WTC11 (cell line): ENCODE measurements at regions of chr2 and their contacts with region 1.

Region 1: DNA sequence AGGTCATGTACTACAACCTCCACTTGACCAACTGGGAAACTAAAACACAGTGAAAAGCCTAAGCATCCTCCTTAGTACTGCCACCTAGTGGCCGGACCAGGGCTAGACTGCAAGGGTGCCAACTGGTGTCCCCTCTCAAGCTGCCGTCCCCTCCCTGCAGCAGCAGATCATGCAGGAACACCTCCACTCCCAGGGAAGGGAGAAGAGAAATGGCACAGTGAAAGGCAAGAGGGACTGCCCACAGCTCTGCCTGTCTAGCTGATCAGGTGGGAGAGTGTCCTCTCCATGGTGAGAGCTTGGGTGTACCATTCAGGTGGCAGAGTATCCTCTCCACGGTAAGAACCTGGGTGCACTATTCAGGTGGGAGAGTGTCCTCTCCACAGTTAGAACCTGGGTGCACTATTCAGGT is 78.1 kb downstream of the AAK1 start:
- DNase-seq: peak; percentile 91
- ATAC-seq: peak; percentile 96
- H3K4me3 Mint-ChIP-seq: no peak overlapping the region
- H3K27ac Mint-ChIP-seq: no peak overlapping the region
- H3K4me1 Mint-ChIP-seq: peaks cover 11% of the 10 kb centered on the region; the same call in 1 of the 2 replicates
- H3K27me3 Mint-ChIP-seq: no peaks in the 10 kb centered on the region
- CTCF ChIP-seq: peak; percentile 87

Region 2: GRCh38 chr2:69375494-69376353 is 189.7 kb before region 1 on chr2:
- CTCF ChIA-PET with region 1: interaction called, 14 read pairs
- POLR2A ChIA-PET with region 1: no interaction called
- DNase-seq: no peak
- ATAC-seq: peak; percentile 80
- H3K4me3 Mint-ChIP-seq: no peak overlapping the region
- H3K27ac Mint-ChIP-seq: peak overlapping the region; percentile 79; the same call in 1 of the 2 replicates
- H3K4me1 Mint-ChIP-seq: peaks cover 9% of the 10 kb centered on the region
- H3K27me3 Mint-ChIP-seq: no peaks in the 10 kb centered on the region
- CTCF ChIP-seq: peak; percentile 38

Region 3: GRCh38 chr2:69581774-69582581 is 16.5 kb after region 1 on chr2:
- CTCF ChIA-PET with region 1: interaction called, 25 read pairs
- POLR2A ChIA-PET with region 1: interaction called, 3 read pairs
- DNase-seq: no peak
- ATAC-seq: no peak
- H3K4me3 Mint-ChIP-seq: no peak overlapping the region
- H3K27ac Mint-ChIP-seq: peak overlapping the region; percentile 87
- H3K4me1 Mint-ChIP-seq: peaks cover 49% of the 10 kb centered on the region
- H3K27me3 Mint-ChIP-seq: no peaks in the 10 kb centered on the region
- CTCF ChIP-seq: no peak

Region 4: GRCh38 chr2:69643602-69644505 is 78.4 kb after region 1 on chr2 and contains the start of gene AAK1:
- CTCF ChIA-PET with region 1: interaction called, 18 read pairs
- POLR2A ChIA-PET with region 1: interaction called, 3 read pairs
- DNase-seq: peak; percentile 81
- ATAC-seq: peak; percentile 69
- H3K4me3 Mint-ChIP-seq: peak within 1 kb of the TSS; percentile 91
- H3K27ac Mint-ChIP-seq: peak within 1 kb of the TSS; percentile 91
- H3K4me1 Mint-ChIP-seq: peaks cover 47% of the 10 kb centered on the region
- H3K27me3 Mint-ChIP-seq: peaks cover 12% of the 10 kb centered on the region
- CTCF ChIP-seq: no peak
- total RNA-seq, gene AAK1: 32.3 to 35.7 TPM (median 35.6 TPM) in 3 replicates

Region 5: DNA sequence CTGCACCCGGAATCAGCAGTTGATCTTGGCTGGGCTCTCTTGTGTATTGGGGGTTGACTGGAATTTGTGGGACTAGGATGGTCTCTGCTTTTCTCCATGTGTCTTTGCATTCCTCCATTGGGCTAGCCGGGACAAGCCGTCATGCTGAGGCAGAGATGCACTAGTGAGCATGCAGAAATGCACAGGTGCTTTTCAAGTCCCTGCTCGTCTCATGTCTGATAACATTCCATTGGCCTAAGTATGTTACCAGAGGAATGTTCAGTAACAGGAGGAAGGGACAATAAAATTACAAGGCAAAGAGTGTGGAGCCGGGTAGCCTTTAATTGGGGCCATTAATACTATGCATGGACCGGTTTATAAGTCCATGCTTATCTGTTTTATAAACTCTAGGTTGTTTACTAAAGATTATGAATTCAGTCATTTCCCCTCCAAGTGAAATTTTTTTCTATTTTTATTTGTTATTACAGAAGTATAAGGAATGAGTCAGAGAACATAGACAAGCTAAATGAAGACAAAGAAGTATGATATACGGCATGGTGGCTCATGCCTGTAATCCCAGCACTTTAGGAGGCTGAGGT is 102.5 kb after region 1 on chr2:
- CTCF ChIA-PET with region 1: no interaction called
- POLR2A ChIA-PET with region 1: no interaction called
- DNase-seq: no peak
- ATAC-seq: peak; percentile 47
- H3K4me3 Mint-ChIP-seq: no peak overlapping the region
- H3K27ac Mint-ChIP-seq: no peak overlapping the region
- H3K4me1 Mint-ChIP-seq: 0 out of 2 replicates have a peak, but pooled peaks cover 4% of the 10 kb centered on the region
- H3K27me3 Mint-ChIP-seq: no peaks in the 10 kb centered on the region
- CTCF ChIP-seq: no peak